ENCODE measurements at regions of chr20 and their contacts with region 1.

Region 1: GRCh38 chr20:35571555-35571954 is 29.7 kb downstream of the ERGIC3 start:
- DNase-seq: no peak
- H3K4me3 ChIP-seq: no peak overlapping the region
- CTCF ChIP-seq: no peak

Region 2: DNA sequence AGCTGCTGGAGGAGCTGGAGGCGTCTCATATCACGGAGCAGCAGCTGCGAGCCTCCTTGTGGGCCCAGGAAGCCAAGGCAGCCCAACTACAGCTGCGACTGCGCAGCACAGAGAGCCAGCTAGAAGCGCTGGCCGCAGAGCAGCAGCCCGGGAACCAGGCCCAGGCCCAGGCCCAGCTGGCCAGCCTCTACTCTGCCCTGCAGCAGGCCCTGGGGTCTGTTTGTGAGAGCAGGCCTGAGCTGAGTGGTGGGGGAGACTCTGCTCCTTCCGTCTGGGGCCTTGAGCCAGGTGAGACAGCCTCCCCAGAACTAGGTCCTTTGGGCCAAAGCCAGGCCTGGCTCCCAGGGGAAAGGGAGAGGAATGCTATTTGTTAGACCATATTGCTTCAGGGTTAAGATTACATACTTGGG is 73.8 kb before region 1 on chr20:
- in situ Hi-C with region 1: loop called (anchors 5 kb)
- DNase-seq: no peak
- H3K4me3 ChIP-seq: no peak overlapping the region
- CTCF ChIP-seq: no peak

Region 3: DNA sequence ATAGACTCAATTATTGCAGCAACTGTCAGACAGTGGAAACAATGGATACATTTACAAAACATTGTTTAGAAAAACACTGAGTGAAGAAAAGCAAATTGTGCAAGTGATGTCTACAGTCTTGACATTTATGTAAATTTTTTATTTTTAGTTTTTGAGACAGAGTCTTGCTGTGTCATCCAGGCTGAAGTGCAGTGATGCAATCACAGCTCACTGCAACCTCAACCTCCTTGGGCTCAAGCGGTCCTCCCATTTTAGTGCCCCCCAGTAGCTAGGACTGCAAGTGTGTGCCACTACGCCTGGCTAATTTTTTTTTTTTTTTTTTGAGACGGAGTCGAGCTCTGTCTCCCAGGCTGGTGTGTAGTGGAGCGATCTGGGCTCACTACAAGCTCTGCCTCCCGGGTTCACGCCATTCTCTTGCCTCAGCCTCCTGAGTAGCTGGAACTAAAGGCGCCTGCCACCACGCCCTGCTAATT is 406.5 kb after region 1 on chr20:
- in situ Hi-C with region 1: no loop called
- DNase-seq: no peak
- H3K4me3 ChIP-seq: no peak overlapping the region
- CTCF ChIP-seq: no peak